ENCODE measurements at regions of chr9 and their contacts with region 1.

Region 1: GRCh38 chr9:121376214-121376830 is 6.3 kb upstream of the STOM start:
- DNase-seq: no peak
- H3K4me3 Mint-ChIP-seq: no peak overlapping the region
- H3K27ac Mint-ChIP-seq: no peak overlapping the region
- H3K4me1 Mint-ChIP-seq: peaks cover 28% of the 10 kb centered on the region
- H3K27me3 Mint-ChIP-seq: no peaks in the 10 kb centered on the region
- CTCF ChIP-seq: peak; percentile 45

Region 2: DNA sequence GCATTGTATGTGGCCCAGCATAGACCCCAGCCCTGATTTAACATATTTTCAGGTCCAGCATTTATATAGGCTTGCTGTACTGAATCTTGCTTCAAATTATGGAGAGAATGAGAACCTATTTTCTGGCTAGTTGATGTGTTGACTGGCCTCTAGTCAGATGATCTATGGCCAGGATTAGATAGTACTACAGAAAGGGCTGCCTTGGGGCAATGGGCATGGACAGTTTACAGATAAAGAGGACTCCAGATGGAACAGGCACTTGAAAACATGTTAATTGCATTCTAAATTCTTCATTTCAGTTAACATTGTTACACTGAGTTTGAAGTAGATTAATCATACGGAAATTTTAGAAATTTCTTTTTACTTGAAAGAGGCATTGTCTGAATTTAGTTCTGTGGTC is 236.2 kb before region 1 on chr9:
- CTCF ChIA-PET with region 1: no interaction called
- POLR2A ChIA-PET with region 1: no interaction called
- intact Hi-C with region 1: no loop called
- DNase-seq: no peak
- H3K4me3 Mint-ChIP-seq: no peak overlapping the region
- H3K27ac Mint-ChIP-seq: no peak overlapping the region
- H3K4me1 Mint-ChIP-seq: no peaks in the 10 kb centered on the region
- H3K27me3 Mint-ChIP-seq: no peaks in the 10 kb centered on the region
- CTCF ChIP-seq: no peak

Region 3: DNA sequence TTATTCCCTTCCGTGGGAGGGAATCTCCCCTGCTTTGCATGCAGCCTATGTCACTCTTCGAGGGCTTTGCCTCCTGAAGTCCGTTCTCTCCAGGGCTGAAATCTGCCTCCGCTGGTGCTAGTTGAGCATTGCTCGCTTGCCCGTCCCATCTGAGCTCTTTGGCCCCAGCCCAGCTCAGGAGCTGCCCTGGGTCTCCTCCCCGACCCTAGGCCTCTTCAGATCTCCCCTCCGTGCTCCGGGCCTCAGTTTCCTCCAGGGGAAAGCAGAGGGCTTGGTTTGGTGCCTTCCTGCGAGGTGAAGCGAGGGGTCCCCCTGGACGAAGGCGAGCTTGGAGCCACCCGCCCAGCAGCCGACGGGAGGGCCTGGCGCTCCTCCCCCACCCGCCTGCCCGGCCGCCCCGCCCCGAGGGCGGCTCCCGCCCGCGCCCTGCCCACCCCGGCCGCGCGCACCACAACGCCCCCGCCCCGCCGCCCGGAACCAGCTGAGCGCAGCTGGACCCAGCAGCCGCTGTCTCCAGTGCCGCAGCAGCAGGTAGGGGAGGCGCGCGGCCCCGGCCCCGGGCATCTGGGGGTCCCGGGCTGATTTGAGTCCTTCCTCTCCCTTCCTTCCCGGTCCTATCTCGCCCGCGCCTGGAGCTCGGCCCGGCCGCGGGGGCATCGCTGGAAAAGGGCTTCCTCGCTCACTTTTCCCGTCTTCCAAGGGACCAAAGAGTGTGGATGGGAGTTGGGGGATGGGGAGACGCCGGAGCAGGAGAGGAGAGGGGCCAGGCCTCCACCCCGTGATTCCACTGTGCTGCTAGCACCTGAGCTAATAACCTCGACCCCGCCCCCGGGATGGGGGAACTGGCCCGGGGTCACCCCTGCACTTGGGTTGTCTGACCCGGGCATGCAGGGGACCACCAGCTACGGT is 108.4 kb before region 1 on chr9 and contains the start of gene GSN:
- CTCF ChIA-PET with region 1: interaction called, 4 read pairs
- POLR2A ChIA-PET with region 1: interaction called, 11 read pairs
- intact Hi-C with region 1: no loop called
- DNase-seq: peak; percentile 49
- H3K4me3 Mint-ChIP-seq: peak within 1 kb of the TSS; percentile 75
- H3K27ac Mint-ChIP-seq: peak within 1 kb of the TSS; percentile 80
- H3K4me1 Mint-ChIP-seq: peaks cover 18% of the 10 kb centered on the region
- H3K27me3 Mint-ChIP-seq: no peaks in the 10 kb centered on the region
- CTCF ChIP-seq: no peak
- total RNA-seq, gene GSN: 21.9 and 24.9 TPM in 2 replicates

Region 4: DNA sequence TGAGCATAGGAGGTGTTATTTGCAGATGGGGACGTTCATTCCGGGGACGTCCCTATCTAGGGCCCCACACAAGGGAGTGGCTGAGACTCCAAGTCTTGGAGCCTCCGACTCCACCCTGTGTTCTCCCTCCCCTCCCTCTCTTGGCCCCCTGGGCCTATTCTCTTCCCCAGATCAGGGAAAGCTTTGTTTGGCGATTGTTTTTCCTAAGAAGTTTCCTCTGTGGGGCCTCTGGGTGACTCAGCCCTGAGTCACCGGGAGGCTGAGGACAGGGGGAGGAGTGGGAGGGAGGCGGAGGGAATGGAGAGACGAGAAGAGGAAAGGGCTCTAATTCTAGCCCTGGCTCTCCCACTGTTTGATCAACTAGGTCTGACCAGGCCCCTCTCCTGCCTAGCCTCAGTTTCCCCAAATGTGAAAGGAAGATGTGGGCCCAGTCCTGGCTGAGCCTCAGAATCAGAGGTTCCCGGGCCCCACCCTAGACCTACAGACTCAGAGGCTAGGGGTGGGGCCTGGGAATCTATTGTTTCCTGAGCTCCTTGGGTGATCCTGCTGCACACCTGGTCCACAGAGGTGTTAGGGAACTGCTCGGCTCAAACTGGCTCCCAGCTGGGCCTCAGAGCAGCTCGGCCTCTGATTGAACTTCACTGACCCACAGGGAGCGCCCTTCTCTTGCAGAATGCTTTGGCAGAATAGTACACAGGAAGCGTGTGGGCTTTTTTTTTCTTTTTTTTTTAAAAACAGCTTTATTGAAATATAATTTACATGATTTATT is 89.2 kb before region 1 on chr9:
- CTCF ChIA-PET with region 1: interaction called, 7 read pairs
- POLR2A ChIA-PET with region 1: interaction called, 62 read pairs
- intact Hi-C with region 1: loop called (anchors 2 kb)
- DNase-seq: peak; percentile 99
- H3K4me3 Mint-ChIP-seq: peak overlapping the region; percentile 32
- H3K27ac Mint-ChIP-seq: peak overlapping the region; percentile 80
- H3K4me1 Mint-ChIP-seq: peaks cover 70% of the 10 kb centered on the region
- H3K27me3 Mint-ChIP-seq: no peaks in the 10 kb centered on the region
- CTCF ChIP-seq: peak; percentile 14

Region 5: DNA sequence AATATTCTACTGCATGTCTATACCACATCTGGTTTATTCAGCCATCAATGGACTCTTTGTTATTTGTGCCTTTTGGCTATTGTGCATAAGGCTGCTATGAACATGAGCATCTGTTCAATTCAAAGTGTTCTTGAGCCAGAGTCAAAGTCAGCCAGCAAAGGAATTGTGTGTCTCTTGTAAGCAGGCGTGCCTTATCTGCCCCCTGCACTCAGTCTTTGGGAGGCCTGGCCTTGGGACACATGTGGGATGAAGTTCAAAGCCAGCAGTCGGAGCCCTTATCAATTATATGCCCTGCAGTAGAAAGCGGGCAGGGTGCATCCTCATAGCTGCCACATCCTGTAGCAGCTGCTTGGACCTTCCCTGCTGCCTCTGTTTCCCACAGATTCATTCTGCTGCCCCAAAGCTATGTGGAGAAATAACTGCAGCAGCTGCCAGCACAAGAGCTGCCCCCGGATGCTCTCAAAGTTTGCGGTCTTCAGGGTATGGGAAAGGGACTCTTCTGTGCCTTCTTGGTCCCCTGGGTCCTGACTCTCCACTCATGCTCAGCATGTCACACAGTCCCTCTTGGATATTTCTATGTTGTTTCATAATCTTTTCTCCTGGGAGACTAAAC is 42.3 kb before region 1 on chr9:
- CTCF ChIA-PET with region 1: interaction called, 5 read pairs
- POLR2A ChIA-PET with region 1: interaction called, 27 read pairs
- intact Hi-C with region 1: no loop called
- DNase-seq: no peak
- H3K4me3 Mint-ChIP-seq: no peak overlapping the region
- H3K27ac Mint-ChIP-seq: peak overlapping the region; percentile 68
- H3K4me1 Mint-ChIP-seq: peaks cover 13% of the 10 kb centered on the region
- H3K27me3 Mint-ChIP-seq: no peaks in the 10 kb centered on the region
- CTCF ChIP-seq: no peak

Region 6: DNA sequence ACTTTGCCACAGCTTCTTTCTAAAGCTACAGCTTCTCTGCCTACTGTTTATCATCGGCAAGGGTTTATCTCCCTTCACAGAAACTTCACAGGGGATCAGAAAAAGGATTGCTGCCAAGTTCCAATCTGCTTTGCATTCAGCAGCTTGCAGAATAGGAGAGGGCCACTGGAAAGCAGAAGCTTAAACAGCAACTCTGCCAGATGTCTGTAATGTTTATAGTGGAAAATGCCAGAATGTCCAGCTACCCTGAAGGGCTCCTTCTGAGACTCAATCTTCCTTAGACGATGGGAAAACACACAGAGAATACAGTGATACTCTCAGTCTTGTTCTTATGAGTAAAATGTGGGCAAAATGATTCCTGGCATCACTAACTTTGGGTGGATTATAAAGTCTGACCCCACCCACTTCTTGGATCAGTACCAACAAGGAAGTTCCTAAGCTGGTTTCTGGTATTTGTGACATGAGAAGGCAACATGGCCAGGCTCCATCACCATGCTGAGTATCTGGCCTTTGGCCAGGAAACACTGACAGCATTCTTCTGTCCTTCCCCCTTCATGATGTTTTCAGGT is 25.2 kb before region 1 on chr9:
- CTCF ChIA-PET with region 1: interaction called, 4 read pairs
- POLR2A ChIA-PET with region 1: interaction called, 22 read pairs
- intact Hi-C with region 1: no loop called
- DNase-seq: peak; percentile 90
- H3K4me3 Mint-ChIP-seq: no peak overlapping the region
- H3K27ac Mint-ChIP-seq: no peak overlapping the region
- H3K4me1 Mint-ChIP-seq: peaks cover 52% of the 10 kb centered on the region
- H3K27me3 Mint-ChIP-seq: no peaks in the 10 kb centered on the region
- CTCF ChIP-seq: no peak

Region 7: DNA sequence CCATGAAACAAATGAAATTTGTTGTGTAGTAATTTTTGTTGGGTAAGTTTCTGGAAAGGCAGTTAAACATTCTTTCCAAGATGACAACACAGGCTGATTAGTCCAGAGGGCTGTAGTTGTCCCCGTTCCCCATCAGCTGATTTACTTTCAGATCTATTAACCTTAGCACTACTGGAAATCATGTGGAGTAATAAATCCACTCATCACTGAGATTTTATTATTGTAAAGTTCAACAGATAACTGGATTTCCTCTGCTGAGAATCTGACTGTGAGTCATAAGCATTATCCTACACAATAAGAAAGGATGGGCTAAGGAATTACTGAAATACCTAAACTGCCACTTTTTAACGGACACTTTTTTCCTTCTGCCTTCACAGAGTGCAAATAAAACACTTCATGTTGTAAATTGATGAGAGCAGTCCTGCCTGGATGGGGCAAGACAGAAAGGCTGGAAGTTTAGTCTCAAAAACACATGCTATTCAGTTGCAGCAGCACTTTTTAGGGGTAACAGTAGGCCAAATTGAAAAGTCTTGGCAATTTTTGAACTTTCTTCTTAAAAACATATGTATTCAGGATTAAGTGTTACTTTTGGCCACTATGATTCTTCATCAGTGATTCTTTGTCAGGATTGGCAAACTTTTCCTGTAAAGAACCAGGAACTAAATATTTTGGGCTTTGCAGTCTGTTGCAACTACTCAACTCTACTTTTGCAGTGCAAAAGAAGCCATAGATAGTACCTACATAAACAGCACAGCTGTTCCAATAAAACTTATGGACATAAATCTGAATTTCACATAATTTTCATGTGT is 13.3 kb before region 1 on chr9:
- CTCF ChIA-PET with region 1: interaction called, 9 read pairs
- POLR2A ChIA-PET with region 1: interaction called, 73 read pairs
- intact Hi-C with region 1: no loop called
- DNase-seq: peak; percentile 47
- H3K4me3 Mint-ChIP-seq: peak overlapping the region; percentile 54
- H3K27ac Mint-ChIP-seq: peak overlapping the region; percentile 66
- H3K4me1 Mint-ChIP-seq: peaks cover 50% of the 10 kb centered on the region
- H3K27me3 Mint-ChIP-seq: no peaks in the 10 kb centered on the region
- CTCF ChIP-seq: no peak

Region 8: DNA sequence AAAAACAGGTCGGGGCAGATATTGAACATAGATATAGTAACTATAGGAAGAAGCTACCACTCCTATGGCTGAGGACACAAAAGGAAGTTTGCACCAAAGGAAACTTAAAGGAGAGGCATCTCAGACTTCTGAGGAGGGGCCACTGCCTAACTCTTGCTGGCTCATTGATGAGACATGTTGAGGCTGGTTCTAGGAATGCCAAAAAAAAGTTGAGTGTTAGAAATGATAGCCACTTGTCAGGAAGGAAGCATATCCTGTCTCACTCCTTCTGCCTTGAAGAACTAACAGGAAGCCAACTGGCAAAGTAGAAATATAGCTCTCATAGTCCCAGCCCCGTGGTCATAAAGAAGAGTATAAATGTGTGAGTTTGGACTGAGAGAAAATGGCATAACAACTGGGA is 17.0 kb after region 1 on chr9:
- CTCF ChIA-PET with region 1: interaction called, 72 read pairs
- POLR2A ChIA-PET with region 1: interaction called, 77 read pairs
- intact Hi-C with region 1: loop called (anchors 1 kb)
- DNase-seq: peak; percentile 43
- H3K4me3 Mint-ChIP-seq: no peak overlapping the region
- H3K27ac Mint-ChIP-seq: peak overlapping the region; percentile 83
- H3K4me1 Mint-ChIP-seq: peaks cover 18% of the 10 kb centered on the region
- H3K27me3 Mint-ChIP-seq: no peaks in the 10 kb centered on the region
- CTCF ChIP-seq: no peak

Measured in MCF 10A (cell line).